Endothelial cell of umbilical vein (primary cell): ENCODE measurements at regions of chr2 and their contacts with region 1.

Region 1: GRCh38 chr2:233756429-233757081 is 3.5 kb upstream of the UGT1A1 start:
- DNase-seq: no peak
- H3K4me3 ChIP-seq: no peak overlapping the region
- H3K27ac ChIP-seq: no peak overlapping the region
- H3K4me1 ChIP-seq: no peaks in the 10 kb centered on the region
- H3K27me3 ChIP-seq: peaks cover 0 to 3% of the 10 kb centered on the region in 2 experiments
- CTCF ChIP-seq: no peak
- POLR2A ChIP-seq: no peak

Region 2: DNA sequence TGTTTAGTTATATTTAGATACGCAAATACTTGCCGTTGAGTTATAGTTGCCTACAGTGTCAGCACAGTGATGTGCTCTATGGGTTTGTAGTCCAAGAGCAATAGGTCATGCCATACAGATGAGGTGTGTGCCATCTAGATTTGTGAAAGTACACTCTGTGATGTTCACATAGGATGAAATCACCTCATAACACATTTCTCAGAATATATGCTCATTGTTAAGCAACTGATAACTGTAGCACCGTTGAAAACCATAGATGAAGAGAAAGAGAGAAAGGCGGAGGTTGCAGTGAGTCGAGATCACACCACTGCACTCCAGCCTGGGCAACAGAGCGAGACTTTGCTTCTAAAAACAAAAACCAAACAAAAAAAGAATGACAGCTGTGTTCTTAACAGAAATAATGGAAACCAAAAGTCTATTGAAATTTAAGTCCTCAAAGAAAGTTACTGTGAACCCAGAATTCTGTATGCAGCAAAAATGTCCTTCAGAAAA is 392.8 kb before region 1 on chr2:
- CTCF ChIA-PET with region 1: no interaction called
- POLR2A ChIA-PET with region 1: no interaction called
- dilution Hi-C with region 1: no loop called
- intact Hi-C with region 1: no loop called
- DNase-seq: no peak
- H3K4me3 ChIP-seq: no peak overlapping the region
- H3K27ac ChIP-seq: no peak overlapping the region
- H3K4me1 ChIP-seq: peaks cover 8% of the 10 kb centered on the region
- H3K27me3 ChIP-seq: no peaks in the 10 kb centered on the region
- CTCF ChIP-seq: no peak
- POLR2A ChIP-seq: no peak

Region 3: GRCh38 chr2:233611284-233611683 is 145.3 kb before region 1 on chr2:
- CTCF ChIA-PET with region 1: no interaction called
- POLR2A ChIA-PET with region 1: no interaction called
- dilution Hi-C with region 1: no loop called
- intact Hi-C with region 1: loop called (anchors 1 kb)
- DNase-seq: no peak
- H3K4me3 ChIP-seq: no peak overlapping the region
- H3K27ac ChIP-seq: no peak overlapping the region
- H3K4me1 ChIP-seq: no peaks in the 10 kb centered on the region
- H3K27me3 ChIP-seq: no peaks in the 10 kb centered on the region
- CTCF ChIP-seq: no peak
- POLR2A ChIP-seq: no peak